ENCODE measurements at regions of chr9 and their contacts with region 1.

Region 1: GRCh38 chr9:120477521-120478001 is 102.4 kb downstream of the CDK5RAP2 start:
- DNase-seq: peak; percentile 42
- H3K4me3 ChIP-seq: no peak overlapping the region
- H3K27me3 ChIP-seq: no peaks in the 10 kb centered on the region
- CTCF ChIP-seq: peak; percentile 100

Region 2: GRCh38 chr9:119968836-119969707 is 508.5 kb before region 1 on chr9:
- CTCF ChIA-PET with region 1: interaction called, 25 read pairs
- POLR2A ChIA-PET with region 1: no interaction called
- DNase-seq: peak; percentile 25
- H3K4me3 ChIP-seq: no peak overlapping the region
- H3K27me3 ChIP-seq: no peaks in the 10 kb centered on the region
- CTCF ChIP-seq: peak; percentile 98

Region 3: DNA sequence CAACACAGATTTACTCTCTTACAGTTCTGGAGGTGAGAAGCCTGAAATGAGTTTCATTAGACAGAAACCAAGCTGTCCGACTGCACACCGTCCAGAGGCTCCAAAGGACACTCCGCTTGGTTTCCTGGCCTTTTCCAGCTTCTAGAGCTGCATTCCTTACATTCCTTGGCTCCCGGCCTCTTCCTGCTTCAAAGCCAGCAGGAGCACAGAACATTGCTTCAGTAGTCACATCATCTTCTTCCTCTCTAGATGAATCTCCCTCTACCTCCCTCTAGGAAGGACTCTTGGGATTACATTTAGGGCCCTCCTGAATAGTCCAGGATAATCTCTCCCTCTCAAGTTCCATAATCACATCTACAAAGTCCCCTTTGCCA is 110.9 kb before region 1 on chr9:
- CTCF ChIA-PET with region 1: interaction called, 13 read pairs
- POLR2A ChIA-PET with region 1: no interaction called
- DNase-seq: peak; percentile 70
- H3K4me3 ChIP-seq: no peak overlapping the region
- H3K27me3 ChIP-seq: no peaks in the 10 kb centered on the region
- CTCF ChIP-seq: peak; percentile 70

Region 4: GRCh38 chr9:120464176-120464886 is 13.2 kb before region 1 on chr9:
- CTCF ChIA-PET with region 1: interaction called, 15 read pairs
- POLR2A ChIA-PET with region 1: no interaction called
- DNase-seq: no peak
- H3K4me3 ChIP-seq: no peak overlapping the region
- H3K27me3 ChIP-seq: no peaks in the 10 kb centered on the region
- CTCF ChIP-seq: no peak